Transverse colon (tissue), 4 donors: ENCODE measurements at regions of chr9 and their contacts with region 1.

Region 1: DNA sequence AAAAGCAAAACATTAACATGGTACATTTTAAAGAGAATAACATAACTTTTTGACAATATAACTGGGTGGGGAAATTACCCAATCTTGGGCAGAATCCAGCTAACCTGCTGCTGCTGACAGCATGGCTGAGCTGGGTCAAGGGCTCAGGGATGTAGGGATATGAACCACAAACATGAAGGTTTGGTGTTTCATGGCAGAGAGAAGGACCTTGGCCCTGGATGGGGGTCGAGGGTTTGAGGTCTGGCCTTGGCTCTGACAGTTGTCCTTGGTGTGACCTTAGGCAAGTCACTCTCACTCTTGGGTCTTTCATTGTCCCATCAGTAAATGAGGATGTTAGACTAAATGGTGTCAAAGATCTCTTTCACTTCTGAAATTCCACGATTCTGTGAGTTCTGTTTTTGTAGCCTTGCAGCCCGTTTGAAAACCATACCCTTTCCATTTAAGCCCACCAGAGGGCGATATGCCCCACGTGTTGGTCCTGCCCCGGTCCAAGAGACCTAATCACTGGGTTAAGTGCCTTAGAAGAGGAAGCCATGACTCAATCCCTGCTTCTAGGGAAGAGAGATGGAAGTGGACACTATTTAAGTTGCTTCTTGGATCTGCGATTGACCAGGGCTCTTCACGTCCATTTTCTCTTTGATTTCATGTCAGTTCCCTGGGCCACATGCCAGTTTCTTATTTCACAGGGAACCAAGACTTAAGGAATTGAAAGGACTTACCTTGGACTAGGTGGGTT is 56.8 kb upstream of the TEX48 start:
- DNase-seq: peak; percentile 74
- H3K4me3 ChIP-seq: no peak overlapping the region
- H3K27ac ChIP-seq: no peak overlapping the region
- H3K4me1 ChIP-seq: peaks cover 0 to 9% (median 0%) of the 10 kb centered on the region in 4 donors
- H3K27me3 ChIP-seq: no peaks in the 10 kb centered on the region
- CTCF ChIP-seq: peak; percentile 79 to 93 (median 88)
- EP300 ChIP-seq: no peak
- POLR2A ChIP-seq: no peak

Region 2: GRCh38 chr9:113331780-113332179 is 1407.0 kb before region 1 on chr9:
- in situ Hi-C with region 1: no loop called
- intact Hi-C with region 1: no loop called
- DNase-seq: no peak
- H3K4me3 ChIP-seq: no peak overlapping the region
- H3K27ac ChIP-seq: no peak overlapping the region
- H3K4me1 ChIP-seq: no peaks in the 10 kb centered on the region
- H3K27me3 ChIP-seq: no peaks in the 10 kb centered on the region
- CTCF ChIP-seq: no peak
- EP300 ChIP-seq: no peak
- POLR2A ChIP-seq: no peak

Region 3: GRCh38 chr9:114681594-114682332 is 57.0 kb before region 1 on chr9 and contains the start of gene TEX48:
- in situ Hi-C with region 1: loop called in 1 of 4 experiments (anchors 10 kb)
- intact Hi-C with region 1: no loop called
- DNase-seq: peak; percentile 83
- H3K4me3 ChIP-seq: no peak within 1 kb of the TSS
- H3K27ac ChIP-seq: no peak within 1 kb of the TSS
- H3K4me1 ChIP-seq: peaks cover 0 to 8% (median 0%) of the 10 kb centered on the region in 4 donors
- H3K27me3 ChIP-seq: no peaks in the 10 kb centered on the region
- CTCF ChIP-seq: peak; percentile 48 to 77 (median 71)
- EP300 ChIP-seq: no peak
- POLR2A ChIP-seq: no peak
- total RNA-seq, gene TEX48: not detected

Region 4: DNA sequence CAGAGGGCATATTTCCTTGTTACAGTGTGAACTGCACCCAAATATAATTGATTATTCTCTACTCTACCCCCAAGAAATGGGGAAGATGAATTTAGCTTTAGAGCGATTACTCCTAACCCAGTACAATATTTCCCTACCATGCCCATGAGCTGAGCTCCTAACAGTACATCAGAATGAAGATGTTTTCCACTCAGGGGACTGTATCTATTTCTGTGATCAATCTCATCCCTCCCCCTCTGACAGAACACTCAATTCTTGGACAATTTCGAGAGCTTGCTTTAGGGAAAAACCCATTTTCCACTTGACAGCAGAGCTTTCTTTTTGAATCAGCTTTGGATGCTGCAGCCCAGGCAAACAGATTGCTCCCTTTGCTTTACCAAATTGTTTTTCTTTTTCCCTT is 32.0 kb before region 1 on chr9:
- in situ Hi-C with region 1: no loop called
- intact Hi-C with region 1: loop called (anchors 1 kb)
- DNase-seq: no peak
- H3K4me3 ChIP-seq: no peak overlapping the region
- H3K27ac ChIP-seq: no peak overlapping the region
- H3K4me1 ChIP-seq: no peaks in the 10 kb centered on the region
- H3K27me3 ChIP-seq: no peaks in the 10 kb centered on the region
- CTCF ChIP-seq: no peak
- EP300 ChIP-seq: no peak
- POLR2A ChIP-seq: no peak

Region 5: DNA sequence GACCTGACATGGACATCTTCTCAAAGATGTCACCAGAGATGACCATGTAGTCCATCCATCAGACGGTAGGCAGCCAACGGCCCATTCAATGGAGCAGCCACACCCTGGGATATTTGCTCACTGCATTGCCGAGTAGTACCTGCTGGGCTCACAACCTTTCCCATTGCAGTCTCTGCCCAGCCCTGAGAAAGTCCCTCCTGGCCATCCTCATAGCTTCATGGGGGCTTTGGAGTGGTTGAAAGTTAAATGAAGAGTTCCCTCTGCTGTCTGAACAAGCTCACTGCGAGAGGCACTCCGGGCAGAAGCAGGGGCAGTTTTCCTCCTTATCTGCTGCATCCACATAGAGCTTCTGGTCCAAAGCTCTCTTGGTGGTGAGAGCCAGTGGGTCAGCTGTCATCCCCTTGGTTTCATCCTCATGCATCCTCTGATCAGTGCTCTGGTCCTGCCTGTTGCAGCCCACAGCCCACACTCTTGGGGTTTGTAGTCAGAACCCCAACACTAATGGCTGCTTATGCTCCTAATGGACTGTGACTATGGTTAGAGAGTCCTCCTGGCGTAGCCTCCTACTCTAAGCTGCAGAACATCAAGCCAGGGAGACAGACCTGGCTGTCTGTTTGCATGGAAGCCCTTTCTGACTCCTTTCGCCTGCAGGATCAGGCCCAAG is 168.3 kb after region 1 on chr9:
- in situ Hi-C with region 1: loop called (anchors 5 to 10 kb)
- intact Hi-C with region 1: no loop called
- DNase-seq: no peak
- H3K4me3 ChIP-seq: no peak overlapping the region
- H3K27ac ChIP-seq: peak overlapping the region in 1 of 4 donors; percentile 40
- H3K4me1 ChIP-seq: peaks cover 0 to 29% (median 9%) of the 10 kb centered on the region in 4 donors
- H3K27me3 ChIP-seq: no peaks in the 10 kb centered on the region
- CTCF ChIP-seq: peak; percentile 29 to 61 (median 41)
- EP300 ChIP-seq: no peak
- POLR2A ChIP-seq: no peak

Region 6: GRCh38 chr9:115524453-115525059 is 785.8 kb after region 1 on chr9:
- in situ Hi-C with region 1: loop called in 1 of 4 experiments (anchors 10 kb)
- intact Hi-C with region 1: no loop called
- DNase-seq: peak; percentile 10
- H3K4me3 ChIP-seq: no peak overlapping the region
- H3K27ac ChIP-seq: peak overlapping the region in 3 of 4 donors; percentile 52 to 76 (median 61)
- H3K4me1 ChIP-seq: peaks cover 0 to 8% (median 3%) of the 10 kb centered on the region in 4 donors
- H3K27me3 ChIP-seq: no peaks in the 10 kb centered on the region
- CTCF ChIP-seq: peak; percentile 66 to 88 (median 72)
- EP300 ChIP-seq: no peak
- POLR2A ChIP-seq: no peak